HepG2 (cell line): ENCODE measurements at regions of chr1 and their contacts with region 1.

Region 1: GRCh38 chr1:95532335-95532734 is 298.3 kb downstream of the RWDD3 start:
- DNase-seq: no peak
- ATAC-seq: peak; percentile 60
- H3K4me3 ChIP-seq: no peak overlapping the region
- H3K27ac ChIP-seq: no peak overlapping the region
- H3K4me1 ChIP-seq: no peaks in the 10 kb centered on the region
- H3K27me3 ChIP-seq: no peaks in the 10 kb centered on the region; a peak in 1 of 5 replicates
- CTCF ChIP-seq: peak; percentile 50
- EP300 ChIP-seq: no peak
- POLR2A ChIP-seq: no peak
- RAD21 ChIP-seq: no peak

Region 2: DNA sequence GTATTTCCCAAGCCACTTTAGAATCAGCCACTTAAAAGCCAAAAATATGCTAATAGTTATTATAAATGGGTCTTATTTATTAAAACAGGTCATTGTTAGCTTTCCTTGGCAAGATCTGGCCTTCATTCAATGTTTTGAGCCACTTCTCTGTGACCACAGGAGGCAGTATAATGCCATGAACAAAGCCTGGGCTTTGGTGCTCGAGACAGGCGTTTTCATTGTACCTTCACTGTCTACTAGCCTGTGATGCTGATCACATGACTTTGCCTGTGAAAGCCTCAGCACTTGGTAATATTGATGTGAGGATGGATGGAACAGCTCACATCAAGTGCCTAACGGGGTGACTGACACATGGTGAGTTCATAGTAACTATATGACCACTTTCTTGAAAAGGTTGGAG is 81.3 kb before region 1 on chr1:
- CTCF ChIA-PET with region 1: no interaction called
- POLR2A ChIA-PET with region 1: no interaction called
- in situ Hi-C with region 1: no loop called
- intact Hi-C with region 1: loop called (anchors 10 kb)
- DNase-seq: peak; percentile 32
- ATAC-seq: peak; percentile 79
- H3K4me3 ChIP-seq: no peak overlapping the region
- H3K27ac ChIP-seq: no peak overlapping the region
- H3K4me1 ChIP-seq: no peaks in the 10 kb centered on the region
- H3K27me3 ChIP-seq: no peaks in the 10 kb centered on the region; a peak in 1 of 5 replicates
- CTCF ChIP-seq: peak; percentile 45
- EP300 ChIP-seq: no peak
- POLR2A ChIP-seq: no peak
- RAD21 ChIP-seq: no peak

Region 3: GRCh38 chr1:95572002-95572401 is 39.7 kb after region 1 on chr1:
- CTCF ChIA-PET with region 1: no interaction called
- POLR2A ChIA-PET with region 1: no interaction called
- in situ Hi-C with region 1: no loop called
- intact Hi-C with region 1: no loop called
- DNase-seq: no peak
- ATAC-seq: no peak
- H3K4me3 ChIP-seq: no peak overlapping the region
- H3K27ac ChIP-seq: no peak overlapping the region
- H3K4me1 ChIP-seq: no peaks in the 10 kb centered on the region
- H3K27me3 ChIP-seq: no peaks in the 10 kb centered on the region; a peak in 1 of 5 replicates
- CTCF ChIP-seq: no peak
- EP300 ChIP-seq: no peak
- POLR2A ChIP-seq: no peak
- RAD21 ChIP-seq: no peak